ENCODE measurements at regions of chr13 and their contacts with region 1.

Region 1: DNA sequence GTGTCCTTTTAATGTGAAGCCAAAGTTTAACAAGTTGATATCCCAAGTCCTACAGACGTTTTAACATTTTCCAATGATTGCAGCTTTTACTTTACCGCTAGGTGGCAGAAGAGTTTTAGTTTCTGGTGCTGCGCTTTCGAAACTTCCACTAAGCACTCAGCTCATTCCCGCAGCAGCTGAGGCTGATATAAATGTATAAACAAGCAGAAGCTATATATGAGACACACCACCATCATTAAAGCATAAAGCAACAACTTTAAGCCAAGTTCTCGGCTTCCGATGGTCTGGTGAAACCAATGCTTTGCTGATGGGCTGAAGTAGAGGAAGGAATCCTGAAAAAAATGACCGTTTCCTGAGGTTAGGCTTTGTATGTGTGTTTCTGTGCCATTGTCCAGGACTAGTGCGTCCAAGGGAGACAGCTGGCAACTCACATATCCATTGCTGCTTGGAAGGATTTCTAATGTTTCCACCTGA is 753.9 kb downstream of the OLFM4 start:
- DNase-seq: peak; percentile 30
- H3K4me3 ChIP-seq: peak overlapping the region; percentile 17 to 53; a peak in 2 of 4 replicates
- H3K27ac ChIP-seq: no peak overlapping the region
- H3K4me1 ChIP-seq: no peaks in the 10 kb centered on the region
- H3K27me3 ChIP-seq: no peaks in the 10 kb centered on the region
- CTCF ChIP-seq: peak; percentile 78
- EP300 ChIP-seq: no peak
- RAD21 ChIP-seq: peak; percentile 83

Region 2: DNA sequence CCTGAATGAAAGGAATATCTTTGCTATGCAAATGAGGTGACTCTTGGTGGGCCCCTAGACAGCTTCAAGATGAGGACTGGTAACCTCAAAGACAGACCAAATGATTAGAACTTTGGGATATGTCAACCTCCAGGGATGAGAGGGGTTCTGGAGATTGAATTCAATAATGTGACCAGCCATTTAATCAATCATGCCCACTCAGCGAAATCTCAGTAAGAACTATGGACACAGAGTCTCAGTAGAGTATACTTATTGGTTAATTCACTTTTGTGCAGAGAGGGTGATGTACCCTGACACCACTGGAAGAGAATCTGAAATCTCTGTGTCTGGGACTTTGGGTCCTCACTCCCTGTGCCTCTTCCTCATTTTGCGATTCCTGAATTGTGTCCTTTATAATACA is 91.1 kb before region 1 on chr13:
- CTCF ChIA-PET with region 1: no interaction called
- POLR2A ChIA-PET with region 1: no interaction called
- DNase-seq: no peak
- H3K4me3 ChIP-seq: no peak overlapping the region
- H3K27ac ChIP-seq: no peak overlapping the region
- H3K4me1 ChIP-seq: no peaks in the 10 kb centered on the region
- H3K27me3 ChIP-seq: no peaks in the 10 kb centered on the region
- CTCF ChIP-seq: no peak
- EP300 ChIP-seq: no peak
- RAD21 ChIP-seq: no peak

Region 3: GRCh38 chr13:53800011-53800410 is 17.5 kb after region 1 on chr13:
- CTCF ChIA-PET with region 1: interaction called, 12 read pairs
- POLR2A ChIA-PET with region 1: no interaction called
- DNase-seq: no peak
- H3K4me3 ChIP-seq: no peak overlapping the region
- H3K27ac ChIP-seq: no peak overlapping the region
- H3K4me1 ChIP-seq: no peaks in the 10 kb centered on the region
- H3K27me3 ChIP-seq: no peaks in the 10 kb centered on the region
- CTCF ChIP-seq: no peak
- EP300 ChIP-seq: no peak
- RAD21 ChIP-seq: no peak

Region 4: GRCh38 chr13:54305377-54305776 is 522.9 kb after region 1 on chr13:
- CTCF ChIA-PET with region 1: interaction called, 12 read pairs
- POLR2A ChIA-PET with region 1: no interaction called
- DNase-seq: no peak
- H3K4me3 ChIP-seq: no peak overlapping the region
- H3K27ac ChIP-seq: no peak overlapping the region
- H3K4me1 ChIP-seq: no peaks in the 10 kb centered on the region
- H3K27me3 ChIP-seq: no peaks in the 10 kb centered on the region
- CTCF ChIP-seq: no peak
- EP300 ChIP-seq: no peak
- RAD21 ChIP-seq: no peak

Measured in SK-N-SH (cell line).